ENCODE measurements at regions of chr11 and their contacts with region 1.

Region 1: DNA sequence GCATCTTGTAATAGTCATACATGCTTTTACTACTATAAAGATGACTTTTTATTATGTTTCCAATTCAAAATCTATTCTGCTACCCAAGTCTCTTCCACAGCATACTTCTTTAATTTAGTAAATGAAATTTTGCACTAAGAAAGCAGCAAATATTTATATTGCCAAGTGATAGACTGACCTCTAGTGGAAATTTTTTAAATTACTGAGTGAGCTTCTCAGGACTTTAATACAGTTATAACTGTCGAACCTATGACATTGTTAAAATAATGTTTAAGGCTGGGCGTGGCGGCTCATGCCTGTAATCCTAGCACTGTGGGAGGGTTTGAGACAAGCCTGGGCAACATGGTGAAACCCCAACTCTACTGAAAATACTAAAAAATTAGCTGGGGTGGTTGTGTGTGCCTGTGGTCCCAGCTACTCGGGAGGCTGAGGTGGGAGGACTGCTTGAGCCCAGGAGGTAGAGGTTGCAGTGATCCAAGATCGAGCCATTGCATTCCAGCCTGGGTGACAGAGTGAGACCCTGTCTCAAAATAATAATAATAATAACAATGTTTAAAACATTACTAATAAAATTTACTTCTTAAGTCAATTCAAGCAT is 27.3 kb downstream of the STK33 start:
- DNase-seq: peak in 6 of 9 donors; percentile 7 to 39 (median 23)
- ATAC-seq: peak; percentile 54
- H3K4me3 ChIP-seq: no peak overlapping the region
- H3K4me3 Mint-ChIP-seq: no peak overlapping the region
- H3K27ac ChIP-seq: no peak overlapping the region
- H3K27ac Mint-ChIP-seq: no peak overlapping the region
- H3K4me1 ChIP-seq: no peaks in the 10 kb centered on the region
- H3K4me1 Mint-ChIP-seq: no peaks in the 10 kb centered on the region
- H3K27me3 ChIP-seq: no peaks in the 10 kb centered on the region
- H3K27me3 Mint-ChIP-seq: peaks cover 39 to 51% (median 44%) of the 10 kb centered on the region in 5 donors

Region 2: DNA sequence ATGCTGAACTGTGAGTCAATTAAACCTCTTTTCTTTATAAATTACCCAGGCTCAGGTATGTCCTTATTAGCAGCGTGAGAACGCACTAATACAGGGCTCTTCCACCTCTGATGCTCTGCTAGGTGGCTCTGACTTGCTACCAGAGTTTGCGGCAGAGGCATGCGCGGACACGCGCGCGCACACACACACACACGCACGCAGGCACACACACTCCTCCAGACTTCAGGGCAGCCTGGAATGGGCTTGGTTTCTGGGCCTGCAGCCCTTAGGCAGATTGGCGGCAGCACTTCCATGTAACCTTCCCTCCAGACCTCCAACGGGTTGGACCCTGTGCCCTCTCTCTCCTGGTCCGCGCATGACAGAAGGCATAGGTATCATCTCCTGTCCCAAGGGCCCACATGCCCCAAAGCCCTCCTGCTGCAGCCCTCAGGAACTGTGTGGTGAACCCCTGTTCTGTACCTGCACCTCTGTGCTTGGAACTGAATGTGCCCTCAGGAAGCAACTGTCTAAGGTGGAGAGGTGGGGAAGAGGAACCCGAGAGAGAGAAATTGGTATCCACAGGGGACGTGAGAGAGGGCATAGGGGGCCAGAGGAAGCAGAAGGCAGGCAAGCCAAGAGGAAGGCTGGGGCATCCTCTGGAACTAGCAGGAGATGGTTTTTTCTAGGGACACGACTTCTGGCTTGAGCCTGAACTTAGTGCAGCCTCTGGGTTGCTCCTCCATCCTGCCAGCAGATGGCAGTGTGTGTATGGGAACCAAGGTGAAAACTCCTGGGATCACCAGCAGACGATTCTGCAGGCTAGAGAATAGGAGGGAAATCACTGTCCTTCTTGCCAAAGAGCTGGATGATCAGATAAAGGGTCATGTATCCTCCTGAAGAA is 374.5 kb before region 1 on chr11:
- CTCF ChIA-PET with region 1: interaction called, 8 read pairs
- POLR2A ChIA-PET with region 1: no interaction called
- intact Hi-C with region 1: loop called in 1 of 2 experiments (anchors 1 kb)
- DNase-seq: peak in 5 of 9 donors; percentile 10 to 30 (median 19)
- ATAC-seq: peak; percentile 75
- H3K4me3 ChIP-seq: no peak overlapping the region
- H3K4me3 Mint-ChIP-seq: no peak overlapping the region
- H3K27ac ChIP-seq: no peak overlapping the region
- H3K27ac Mint-ChIP-seq: no peak overlapping the region
- H3K4me1 ChIP-seq: no peaks in the 10 kb centered on the region
- H3K4me1 Mint-ChIP-seq: peaks cover 0 to 3% (median 0%) of the 10 kb centered on the region in 7 donors
- H3K27me3 ChIP-seq: no peaks in the 10 kb centered on the region
- H3K27me3 Mint-ChIP-seq: peaks cover 4 to 46% (median 42%) of the 10 kb centered on the region in 5 donors

Region 3: GRCh38 chr11:8225589-8226036 is 341.1 kb before region 1 on chr11:
- CTCF ChIA-PET with region 1: interaction called, 6 read pairs
- POLR2A ChIA-PET with region 1: no interaction called
- intact Hi-C with region 1: loop called in 1 of 2 experiments (anchors 1 kb)
- DNase-seq: peak; percentile 11 to 66 (median 48)
- ATAC-seq: peak; percentile 65
- H3K4me3 ChIP-seq: no peak overlapping the region
- H3K4me3 Mint-ChIP-seq: no peak overlapping the region
- H3K27ac ChIP-seq: no peak overlapping the region
- H3K27ac Mint-ChIP-seq: no peak overlapping the region
- H3K4me1 ChIP-seq: no peaks in the 10 kb centered on the region
- H3K4me1 Mint-ChIP-seq: peaks cover 0 to 4% (median 0%) of the 10 kb centered on the region in 7 donors
- H3K27me3 ChIP-seq: no peaks in the 10 kb centered on the region
- H3K27me3 Mint-ChIP-seq: peaks cover 0 to 6% (median 0%) of the 10 kb centered on the region in 5 donors

Region 4: GRCh38 chr11:8328848-8329330 is 237.8 kb before region 1 on chr11:
- CTCF ChIA-PET with region 1: no interaction called
- POLR2A ChIA-PET with region 1: no interaction called
- intact Hi-C with region 1: loop called in 1 of 2 experiments (anchors 1 kb)
- DNase-seq: peak in 7 of 9 donors; percentile 5 to 74 (median 17)
- ATAC-seq: peak; percentile 78
- H3K4me3 ChIP-seq: no peak overlapping the region
- H3K4me3 Mint-ChIP-seq: no peak overlapping the region
- H3K27ac ChIP-seq: no peak overlapping the region
- H3K27ac Mint-ChIP-seq: no peak overlapping the region
- H3K4me1 ChIP-seq: no peaks in the 10 kb centered on the region
- H3K4me1 Mint-ChIP-seq: peaks cover 0 to 4% (median 0%) of the 10 kb centered on the region in 7 donors
- H3K27me3 ChIP-seq: no peaks in the 10 kb centered on the region
- H3K27me3 Mint-ChIP-seq: peaks cover 0 to 8% (median 4%) of the 10 kb centered on the region in 5 donors

Region 5: GRCh38 chr11:8338138-8338537 is 228.6 kb before region 1 on chr11:
- CTCF ChIA-PET with region 1: no interaction called
- POLR2A ChIA-PET with region 1: no interaction called
- intact Hi-C with region 1: loop called in 1 of 2 experiments (anchors 2 kb)
- DNase-seq: peak in 1 of 9 donors; percentile 45
- ATAC-seq: peak; percentile 50
- H3K4me3 ChIP-seq: no peak overlapping the region
- H3K4me3 Mint-ChIP-seq: no peak overlapping the region
- H3K27ac ChIP-seq: no peak overlapping the region
- H3K27ac Mint-ChIP-seq: no peak overlapping the region
- H3K4me1 ChIP-seq: no peaks in the 10 kb centered on the region
- H3K4me1 Mint-ChIP-seq: peaks cover 0 to 3% (median 0%) of the 10 kb centered on the region in 7 donors
- H3K27me3 ChIP-seq: no peaks in the 10 kb centered on the region
- H3K27me3 Mint-ChIP-seq: peaks cover 0 to 6% (median 0%) of the 10 kb centered on the region in 5 donors

Measured in naive thymus-derived CD4-positive, alpha-beta T cell (primary cell).